ENCODE measurements at regions of chr12 and their contacts with region 1.

Region 1: DNA sequence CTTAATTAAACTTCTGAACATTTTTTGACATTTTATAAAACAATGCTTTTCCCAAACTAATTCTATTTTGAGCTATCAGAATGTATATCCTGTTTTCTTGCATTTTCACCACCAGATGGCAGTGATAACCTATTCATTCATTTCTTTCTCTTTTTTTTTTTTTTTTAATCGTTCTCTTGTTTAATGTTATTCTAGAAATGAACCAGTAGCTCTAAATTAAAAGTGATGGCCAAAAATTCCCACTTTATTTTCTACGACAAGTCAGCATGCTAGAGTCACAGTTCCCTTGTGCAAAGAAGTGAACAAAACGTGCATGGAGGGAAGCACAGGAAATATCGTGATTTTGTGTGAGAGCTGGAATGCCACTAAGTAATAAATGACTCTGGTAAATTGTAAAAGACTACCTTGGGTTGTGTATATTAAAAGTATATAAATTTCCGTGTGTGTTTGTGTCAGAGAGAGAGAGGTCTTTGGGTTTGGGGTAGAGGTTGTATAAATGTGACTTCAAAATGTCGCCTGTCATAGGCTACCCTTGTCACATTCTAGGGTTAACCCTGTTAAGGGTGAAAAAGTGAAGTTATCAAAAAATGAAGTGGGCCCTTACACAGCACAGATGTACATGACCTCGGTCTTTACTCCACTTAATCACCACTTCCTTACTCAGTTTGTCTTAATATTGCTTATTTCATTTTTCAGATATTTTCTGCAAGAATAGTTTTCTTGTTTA is 40.4 kb upstream of the LDHB start:
- DNase-seq: no peak
- CTCF ChIP-seq: peak; percentile 39

Region 2: GRCh38 chr12:21683115-21683514 is 15.0 kb before region 1 on chr12:
- CTCF ChIA-PET with region 1: interaction called, 25 read pairs
- POLR2A ChIA-PET with region 1: no interaction called
- DNase-seq: no peak
- CTCF ChIP-seq: no peak

Region 3: GRCh38 chr12:21710948-21711775 is 13.1 kb after region 1 on chr12:
- CTCF ChIA-PET with region 1: interaction called, 23 read pairs
- POLR2A ChIA-PET with region 1: no interaction called
- DNase-seq: no peak
- CTCF ChIP-seq: no peak

Region 4: GRCh38 chr12:21775133-21775820 is 77.2 kb after region 1 on chr12:
- CTCF ChIA-PET with region 1: no interaction called
- POLR2A ChIA-PET with region 1: no interaction called
- DNase-seq: no peak
- CTCF ChIP-seq: no peak

Region 5: GRCh38 chr12:21989819-21990412 is 291.8 kb after region 1 on chr12:
- CTCF ChIA-PET with region 1: interaction called, 12 read pairs
- POLR2A ChIA-PET with region 1: no interaction called
- DNase-seq: no peak
- CTCF ChIP-seq: peak; percentile 19

Region 6: GRCh38 chr12:22002430-22002829 is 304.4 kb after region 1 on chr12:
- CTCF ChIA-PET with region 1: no interaction called
- POLR2A ChIA-PET with region 1: no interaction called
- DNase-seq: no peak
- CTCF ChIP-seq: no peak

Region 7: DNA sequence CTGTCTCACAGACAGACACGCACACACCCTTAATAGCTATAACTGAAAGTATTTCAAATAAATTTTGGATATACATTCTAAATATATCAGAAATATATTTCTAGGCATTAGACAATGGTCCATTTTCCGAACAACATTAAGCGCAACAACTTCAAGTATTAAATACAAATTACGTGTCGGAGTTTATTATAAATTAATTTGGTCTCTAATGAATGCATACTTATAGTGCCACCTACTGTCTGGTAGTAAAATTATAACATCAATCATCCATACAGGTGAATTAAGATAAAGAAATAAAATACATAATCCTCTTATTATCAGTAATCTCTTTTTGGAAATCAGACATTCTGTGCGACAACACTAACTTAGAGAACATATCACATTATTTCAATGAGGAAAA is 320.8 kb after region 1 on chr12:
- CTCF ChIA-PET with region 1: interaction called, 25 read pairs
- POLR2A ChIA-PET with region 1: no interaction called
- DNase-seq: peak; percentile 10
- CTCF ChIP-seq: peak; percentile 39

Measured in GM10248 (cell line).